ENCODE measurements at regions of chr18 and their contacts with region 1.

Region 1: DNA sequence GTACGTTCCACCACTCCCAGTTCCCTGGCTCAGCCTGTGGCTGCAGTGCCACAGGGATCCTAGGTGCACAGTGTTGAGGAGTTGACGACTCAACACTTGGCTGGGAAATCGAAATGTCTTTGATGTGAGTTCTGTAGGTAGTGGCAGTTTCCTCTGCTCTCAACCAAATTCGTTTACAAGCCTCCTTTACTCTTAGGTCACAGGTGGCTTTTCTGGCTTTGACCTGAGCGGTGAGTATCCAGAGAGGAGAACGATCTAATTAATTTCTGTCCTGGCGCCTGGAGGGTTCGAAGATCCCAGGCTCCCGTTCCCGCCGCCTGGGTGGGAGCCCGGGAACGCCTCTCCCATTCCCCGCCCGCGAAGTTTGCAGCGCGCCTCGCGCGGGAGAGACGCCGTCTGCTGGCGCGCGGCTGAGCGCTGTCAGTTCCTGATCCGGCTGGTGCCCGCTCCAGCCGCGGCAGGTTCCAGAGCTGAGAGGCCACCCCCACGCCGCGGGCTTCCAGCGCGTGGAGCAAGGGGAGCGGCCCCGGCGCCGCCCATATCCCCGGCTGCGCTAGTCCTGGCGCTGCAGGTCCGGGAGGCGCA is at the start of gene LAMA3:
- DNase-seq: peak; percentile 77
- H3K4me3 ChIP-seq: peak within 1 kb of the TSS; percentile 28 to 64 (median 54)
- H3K27ac ChIP-seq: peak within 1 kb of the TSS in 3 of 4 donors; percentile 41 to 76 (median 48)
- H3K4me1 ChIP-seq: peaks cover 0 to 25% (median 18%) of the 10 kb centered on the region in 4 donors
- H3K27me3 ChIP-seq: peaks cover 0 to 24% (median 6%) of the 10 kb centered on the region in 3 donors
- CTCF ChIP-seq: peak in 1 of 4 experiments; percentile 14
- EP300 ChIP-seq: no peak
- POLR2A ChIP-seq: no peak
- total RNA-seq, gene LAMA3: 8.4 to 18.6 (median 12.2) TPM

Region 2: GRCh38 chr18:23740105-23740830 is 51.1 kb after region 1 on chr18:
- intact Hi-C with region 1: loop called (anchors 5 kb)
- DNase-seq: no peak
- H3K4me3 ChIP-seq: no peak overlapping the region
- H3K27ac ChIP-seq: no peak overlapping the region
- H3K4me1 ChIP-seq: peaks cover 0 to 9% (median 0%) of the 10 kb centered on the region in 4 donors
- H3K27me3 ChIP-seq: no peaks in the 10 kb centered on the region
- CTCF ChIP-seq: no peak
- EP300 ChIP-seq: no peak
- POLR2A ChIP-seq: no peak

Region 3: GRCh38 chr18:23784832-23785245 is 95.7 kb after region 1 on chr18:
- intact Hi-C with region 1: no loop called
- DNase-seq: no peak
- H3K4me3 ChIP-seq: no peak overlapping the region
- H3K27ac ChIP-seq: no peak overlapping the region
- H3K4me1 ChIP-seq: peaks cover 0 to 9% (median 7%) of the 10 kb centered on the region in 4 donors
- H3K27me3 ChIP-seq: no peaks in the 10 kb centered on the region
- CTCF ChIP-seq: no peak
- EP300 ChIP-seq: no peak
- POLR2A ChIP-seq: no peak

Region 4: GRCh38 chr18:23812546-23813440 is 123.7 kb after region 1 on chr18:
- intact Hi-C with region 1: loop called (anchors 10 kb)
- DNase-seq: no peak
- H3K4me3 ChIP-seq: no peak overlapping the region
- H3K27ac ChIP-seq: no peak overlapping the region
- H3K4me1 ChIP-seq: no peaks in the 10 kb centered on the region
- H3K27me3 ChIP-seq: no peaks in the 10 kb centered on the region
- CTCF ChIP-seq: peak in 3 of 4 experiments; percentile 45 to 62 (median 50)
- EP300 ChIP-seq: no peak
- POLR2A ChIP-seq: no peak

Region 5: GRCh38 chr18:23918401-23919032 is 229.4 kb after region 1 on chr18:
- intact Hi-C with region 1: loop called (anchors 10 kb)
- DNase-seq: peak; percentile 81
- H3K4me3 ChIP-seq: no peak overlapping the region
- H3K27ac ChIP-seq: no peak overlapping the region
- H3K4me1 ChIP-seq: no peaks in the 10 kb centered on the region
- H3K27me3 ChIP-seq: no peaks in the 10 kb centered on the region
- CTCF ChIP-seq: peak; percentile 32 to 80 (median 74)
- EP300 ChIP-seq: no peak
- POLR2A ChIP-seq: no peak